ENCODE measurements at regions of chr20 and their contacts with region 1.

Region 1: DNA sequence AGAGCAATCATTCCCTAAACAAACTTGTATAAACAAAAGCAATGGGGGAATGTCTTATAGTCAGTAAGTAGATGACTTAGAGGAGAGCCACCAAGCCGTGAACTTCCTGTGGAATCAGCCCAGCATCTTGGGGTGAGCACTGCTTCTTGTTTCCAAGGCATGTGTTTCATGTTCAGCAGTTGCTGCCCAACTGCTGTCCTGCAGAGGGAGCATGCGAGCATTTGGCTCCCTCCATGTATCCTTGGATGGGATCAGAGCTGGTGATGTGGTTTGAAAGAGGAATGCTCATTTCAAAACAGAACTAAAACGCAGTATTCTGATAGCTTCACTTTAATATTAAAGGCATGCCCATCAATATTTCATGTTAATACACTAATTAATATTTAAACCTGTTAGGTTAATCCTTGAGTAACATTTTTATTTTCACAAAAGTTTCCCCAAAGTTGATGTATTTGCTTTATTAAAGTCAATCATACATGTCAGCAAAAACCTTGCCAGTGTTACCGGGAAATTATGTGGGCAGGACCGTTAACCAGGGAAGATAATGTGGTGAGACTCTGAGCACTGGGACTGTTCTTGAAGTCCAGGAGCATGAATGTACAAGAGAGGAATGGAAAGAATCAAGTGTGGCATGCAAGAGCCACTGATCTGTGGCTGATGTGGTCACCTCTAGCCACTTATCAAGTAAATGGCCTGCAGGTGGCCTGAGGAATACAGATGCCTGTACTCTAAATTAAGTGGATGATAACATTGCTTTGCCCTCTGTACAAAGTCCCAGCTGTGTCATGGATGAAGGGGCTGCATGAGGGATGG is 172.2 kb upstream of the GGTLC1 start:
- DNase-seq: peak; percentile 29
- H3K4me3 ChIP-seq: no peak overlapping the region
- H3K27ac ChIP-seq: no peak overlapping the region
- H3K27me3 ChIP-seq: no peaks in the 10 kb centered on the region
- CTCF ChIP-seq: peak; percentile 89

Region 2: DNA sequence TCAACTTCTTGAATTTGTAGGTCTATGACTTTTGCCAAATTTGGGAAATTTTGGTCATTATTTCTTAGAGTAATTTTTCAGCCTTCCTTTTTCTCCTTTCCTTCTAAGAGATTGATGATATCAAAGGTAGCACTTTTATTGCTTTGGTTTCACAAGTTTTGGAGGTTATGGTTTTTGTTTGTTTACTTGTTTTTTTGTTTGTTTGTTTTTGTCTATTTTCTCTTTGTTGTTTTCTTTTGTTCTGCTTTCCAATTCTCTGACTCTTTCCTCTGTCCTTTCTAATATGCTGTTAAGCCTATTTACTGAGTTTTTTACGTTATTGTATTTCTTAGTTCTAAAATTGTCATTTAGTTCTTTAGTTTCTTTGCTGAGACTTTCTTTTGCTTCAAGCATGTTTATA is 12.4 kb after region 1 on chr20:
- CTCF ChIA-PET with region 1: interaction called, 15 read pairs
- POLR2A ChIA-PET with region 1: no interaction called
- DNase-seq: no peak
- H3K4me3 ChIP-seq: no peak overlapping the region
- H3K27ac ChIP-seq: no peak overlapping the region
- H3K27me3 ChIP-seq: no peaks in the 10 kb centered on the region
- CTCF ChIP-seq: no peak

Region 3: DNA sequence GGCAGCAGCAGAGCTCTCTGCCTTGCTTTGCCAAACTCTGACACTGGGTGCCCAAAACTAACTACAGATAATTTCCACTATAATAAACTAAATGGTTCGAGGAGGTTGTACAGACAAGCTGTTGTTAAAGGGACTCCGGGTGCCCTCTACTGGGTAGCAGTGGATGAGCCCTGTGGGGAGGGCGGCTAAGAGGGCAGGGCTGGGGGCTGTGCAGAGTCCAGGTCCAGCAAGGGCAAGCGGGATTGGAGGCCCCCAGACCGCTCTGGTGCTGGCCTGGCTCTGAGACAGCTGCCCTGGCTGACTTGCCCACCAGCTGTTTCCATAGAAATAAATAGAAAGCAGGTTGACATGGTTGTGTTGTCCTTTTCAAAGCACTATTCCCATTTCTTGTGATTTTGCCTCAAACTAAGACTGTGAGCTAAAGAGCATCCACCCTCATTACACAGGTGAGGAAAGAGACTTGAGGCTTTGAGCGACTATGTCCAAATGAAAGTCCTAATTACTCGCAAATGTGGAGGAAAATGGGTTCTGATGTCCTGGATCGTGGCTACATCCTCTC is 620.7 kb after region 1 on chr20:
- CTCF ChIA-PET with region 1: interaction called, 28 read pairs
- POLR2A ChIA-PET with region 1: no interaction called
- DNase-seq: no peak
- H3K4me3 ChIP-seq: no peak overlapping the region
- H3K27ac ChIP-seq: no peak overlapping the region
- H3K27me3 ChIP-seq: peaks cover 26% of the 10 kb centered on the region
- CTCF ChIP-seq: peak; percentile 81

Region 4: DNA sequence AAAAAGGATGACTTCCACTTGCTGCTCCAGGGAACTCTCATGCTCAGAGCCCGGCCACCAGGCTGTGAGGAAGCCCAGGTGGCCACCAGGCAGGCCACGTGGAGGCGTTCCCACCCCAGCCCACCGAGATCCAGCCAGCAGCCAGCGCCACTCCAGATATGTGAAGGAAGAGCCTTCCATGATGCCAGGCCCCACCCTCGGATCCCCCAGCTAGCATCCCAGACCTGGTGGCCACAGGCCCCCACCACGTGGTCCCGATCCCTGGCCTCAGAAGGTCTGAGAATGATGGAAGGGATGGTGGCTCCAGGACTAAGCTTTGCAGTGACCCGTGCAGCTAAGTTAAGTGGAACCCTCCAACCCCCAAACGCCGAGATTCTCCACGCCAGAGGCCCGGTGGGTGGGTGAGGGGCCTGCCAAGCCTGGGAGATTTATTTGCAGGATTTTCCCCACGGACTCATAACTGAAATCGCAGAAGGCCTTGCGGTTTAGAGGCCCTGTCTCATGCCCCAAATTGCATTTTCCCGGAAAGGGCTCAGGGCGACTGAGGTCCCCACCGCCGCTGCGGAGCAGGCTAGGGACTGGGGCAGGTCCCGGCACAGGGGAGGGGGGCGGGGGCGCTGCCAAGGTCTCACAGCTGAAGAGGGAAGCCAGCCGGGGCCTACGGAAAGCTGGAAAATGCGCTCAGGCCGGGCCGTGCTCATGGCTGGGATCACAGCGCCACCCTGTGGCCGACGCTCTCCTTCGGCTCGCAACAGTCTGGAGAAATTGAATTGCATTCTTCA is 757.2 kb after region 1 on chr20:
- CTCF ChIA-PET with region 1: interaction called, 96 read pairs
- POLR2A ChIA-PET with region 1: no interaction called
- DNase-seq: peak; percentile 33
- H3K4me3 ChIP-seq: 0 out of 2 replicates have a peak overlapping the region, but pooled peaks have one; percentile 7
- H3K27ac ChIP-seq: no peak overlapping the region
- H3K27me3 ChIP-seq: no peaks in the 10 kb centered on the region
- CTCF ChIP-seq: peak; percentile 86

Measured in AG04450 (cell line).